Panc1 (cell line): ENCODE measurements at regions of chr6 and their contacts with region 1.

Region 1: GRCh38 chr6:17527076-17527475 is 73.0 kb upstream of the FAM8A1 start:
- DNase-seq: no peak
- ATAC-seq: no peak
- H3K4me3 ChIP-seq: no peak overlapping the region
- H3K27ac ChIP-seq: no peak overlapping the region
- H3K4me1 ChIP-seq: no peaks in the 10 kb centered on the region
- H3K27me3 ChIP-seq: no peaks in the 10 kb centered on the region
- CTCF ChIP-seq: no peak

Region 2: GRCh38 chr6:17466707-17467106 is 60.4 kb before region 1 on chr6:
- CTCF ChIA-PET with region 1: interaction called, 11 read pairs
- POLR2A ChIA-PET with region 1: no interaction called
- in situ Hi-C with region 1: no loop called
- intact Hi-C with region 1: no loop called
- DNase-seq: no peak
- ATAC-seq: no peak
- H3K4me3 ChIP-seq: no peak overlapping the region
- H3K27ac ChIP-seq: no peak overlapping the region
- H3K4me1 ChIP-seq: no peaks in the 10 kb centered on the region
- H3K27me3 ChIP-seq: no peaks in the 10 kb centered on the region
- CTCF ChIP-seq: no peak